HepG2 (cell line): ENCODE measurements at regions of chr1 and their contacts with region 1.

Region 1: DNA sequence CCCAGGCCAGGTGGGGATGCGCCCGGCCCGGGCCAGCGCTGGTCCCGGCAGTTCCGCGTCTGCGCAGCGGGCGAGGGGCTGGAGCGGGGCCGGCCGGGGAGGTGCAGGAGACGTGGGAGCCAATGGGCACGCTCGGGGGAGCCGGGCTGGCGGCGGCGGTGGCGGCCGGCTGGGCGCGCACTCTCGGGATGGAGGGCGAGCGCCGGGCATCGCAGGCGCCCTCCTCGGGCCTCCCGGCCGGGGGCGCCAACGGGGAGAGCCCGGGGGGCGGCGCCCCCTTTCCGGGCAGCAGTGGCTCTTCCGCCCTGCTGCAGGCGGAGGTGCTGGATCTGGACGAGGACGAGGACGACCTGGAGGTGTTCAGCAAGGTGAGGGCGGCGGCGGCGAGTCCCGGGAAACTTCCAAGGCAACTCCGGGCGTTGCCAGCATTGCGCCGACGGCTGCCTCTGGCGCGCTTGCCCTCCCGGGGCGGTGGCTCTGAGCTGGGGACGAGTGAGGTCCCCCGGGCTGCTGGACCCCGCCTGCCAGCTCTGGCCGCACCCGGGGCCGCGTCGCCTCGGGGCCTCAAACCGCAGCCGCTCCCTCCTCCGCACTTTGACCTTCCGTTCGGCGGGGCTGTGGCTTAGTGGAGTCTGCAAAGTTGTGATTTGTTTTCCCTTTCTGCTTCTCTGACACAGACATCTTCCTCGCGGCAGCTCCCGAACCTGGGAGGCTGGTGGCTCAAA is at the start of gene SNX7:
- DNase-seq: peak; percentile 71
- ATAC-seq: peak; percentile 97
- H3K4me3 ChIP-seq: peak within 1 kb of the TSS; percentile 75 to 85 (median 82)
- H3K27ac ChIP-seq: peak within 1 kb of the TSS; percentile 78
- H3K4me1 ChIP-seq: peaks cover 36% of the 10 kb centered on the region
- H3K27me3 ChIP-seq: no peaks in the 10 kb centered on the region
- CTCF ChIP-seq: peak; percentile 29; the same call in 1 of the 2 replicates
- EP300 ChIP-seq: no peak
- POLR2A ChIP-seq: peak; percentile 52
- RAD21 ChIP-seq: peak; percentile 54
- total RNA-seq, gene SNX7: 33.5 and 45.2 TPM in 2 replicates

Region 2: DNA sequence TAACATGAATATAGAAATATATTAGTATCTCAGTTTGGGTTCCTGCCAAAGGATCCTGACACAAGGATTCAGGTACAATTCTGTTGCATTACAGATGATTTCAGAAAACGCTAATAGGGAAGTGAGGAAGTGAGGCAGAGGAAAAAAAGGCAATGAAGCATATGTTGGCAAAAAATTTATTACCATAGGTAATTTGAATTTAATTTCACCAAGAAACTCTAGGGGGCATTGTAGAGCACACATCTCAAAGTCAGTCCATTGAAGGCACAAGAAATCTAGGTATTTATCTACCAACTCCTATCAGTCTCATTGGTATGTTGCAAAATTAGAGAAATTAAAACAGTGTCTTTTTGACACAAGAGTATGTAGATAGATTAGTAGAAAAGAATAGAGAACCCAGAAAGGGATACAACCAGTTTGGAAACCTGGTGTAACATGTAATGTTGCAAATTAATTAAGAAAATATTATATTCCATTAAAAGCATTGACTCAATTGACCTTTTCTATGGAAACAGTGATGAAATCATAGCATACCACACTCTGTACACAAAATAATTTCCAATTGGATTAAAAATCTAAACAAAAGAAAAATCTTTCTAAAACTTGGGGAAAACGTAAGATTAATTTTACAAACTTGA is 105.1 kb before region 1 on chr1:
- CTCF ChIA-PET with region 1: no interaction called
- POLR2A ChIA-PET with region 1: no interaction called
- in situ Hi-C with region 1: no loop called
- intact Hi-C with region 1: loop called (anchors 10 kb)
- DNase-seq: peak; percentile 30
- ATAC-seq: no peak
- H3K4me3 ChIP-seq: no peak overlapping the region
- H3K27ac ChIP-seq: no peak overlapping the region
- H3K4me1 ChIP-seq: no peaks in the 10 kb centered on the region
- H3K27me3 ChIP-seq: no peaks in the 10 kb centered on the region
- CTCF ChIP-seq: peak; percentile 36; the same call in 1 of the 2 replicates
- EP300 ChIP-seq: no peak
- POLR2A ChIP-seq: no peak
- RAD21 ChIP-seq: no peak

Region 3: DNA sequence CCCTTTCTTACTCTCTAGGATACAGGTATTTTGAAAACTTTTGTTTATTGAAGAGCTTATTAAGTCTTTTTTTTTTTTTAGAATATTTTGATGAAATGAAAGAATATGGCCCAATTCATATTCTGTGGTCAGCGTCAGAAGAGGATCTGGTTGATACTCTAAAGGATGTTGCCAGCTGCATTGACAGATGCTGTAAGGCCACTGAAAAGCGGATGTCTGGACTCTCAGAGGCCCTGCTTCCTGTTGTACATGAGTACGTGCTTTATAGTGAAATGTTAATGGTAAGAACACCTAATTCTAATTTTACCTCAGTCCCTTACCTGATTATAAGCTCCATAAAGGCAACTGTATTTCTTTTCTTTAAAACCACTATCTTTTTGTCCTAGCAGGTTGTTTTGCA is 36.9 kb after region 1 on chr1:
- CTCF ChIA-PET with region 1: no interaction called
- POLR2A ChIA-PET with region 1: no interaction called
- in situ Hi-C with region 1: no loop called
- intact Hi-C with region 1: loop called (anchors 5 kb)
- DNase-seq: no peak
- ATAC-seq: no peak
- H3K4me3 ChIP-seq: no peak overlapping the region
- H3K27ac ChIP-seq: no peak overlapping the region
- H3K4me1 ChIP-seq: no peaks in the 10 kb centered on the region
- H3K27me3 ChIP-seq: no peaks in the 10 kb centered on the region; a peak in 1 of 5 replicates
- CTCF ChIP-seq: no peak
- EP300 ChIP-seq: no peak
- POLR2A ChIP-seq: no peak
- RAD21 ChIP-seq: no peak

Region 4: GRCh38 chr1:98794196-98794886 is 132.6 kb after region 1 on chr1:
- CTCF ChIA-PET with region 1: no interaction called
- POLR2A ChIA-PET with region 1: no interaction called
- in situ Hi-C with region 1: no loop called
- intact Hi-C with region 1: no loop called
- DNase-seq: peak; percentile 42
- ATAC-seq: peak; percentile 94
- H3K4me3 ChIP-seq: no peak overlapping the region
- H3K27ac ChIP-seq: no peak overlapping the region
- H3K4me1 ChIP-seq: no peaks in the 10 kb centered on the region
- H3K27me3 ChIP-seq: no peaks in the 10 kb centered on the region
- CTCF ChIP-seq: peak; percentile 74
- EP300 ChIP-seq: no peak
- POLR2A ChIP-seq: no peak
- RAD21 ChIP-seq: 0 out of 2 replicates have a peak, but pooled peaks have one; percentile 18